A549 (cell line): ENCODE measurements at regions of chr19 and their contacts with region 1.

Region 1: GRCh38 chr19:49570138-49570856 is 10.1 kb downstream of the NOSIP start:
- DNase-seq: peak; percentile 92
- ATAC-seq: peak; percentile 94 to 95
- H3K4me3 ChIP-seq: no peak overlapping the region
- H3K27ac ChIP-seq: no peak overlapping the region
- H3K4me1 ChIP-seq: peaks cover 13% of the 10 kb centered on the region
- CTCF ChIP-seq: peak; percentile 100
- EP300 ChIP-seq: no peak
- POLR2A ChIP-seq: no peak
- RAD21 ChIP-seq: peak; percentile 88 to 94

Region 2: GRCh38 chr19:49473868-49474544 is 96.3 kb before region 1 on chr19 and contains the start of gene FLT3LG:
- CTCF ChIA-PET with region 1: interaction called, 14 read pairs
- POLR2A ChIA-PET with region 1: no interaction called
- DNase-seq: peak; percentile 61 to 90
- ATAC-seq: peak; percentile 59 to 71
- H3K4me3 ChIP-seq: peak within 1 kb of the TSS; percentile 59
- H3K27ac ChIP-seq: peak within 1 kb of the TSS; percentile 77 to 91
- H3K4me1 ChIP-seq: peaks cover 21% of the 10 kb centered on the region
- CTCF ChIP-seq: peak; percentile 99
- EP300 ChIP-seq: no peak
- POLR2A ChIP-seq: no peak
- RAD21 ChIP-seq: peak; percentile 36 to 59
- polyA plus RNA-seq, gene FLT3LG: 0.42 and 0.58 TPM in 2 replicates

Region 3: DNA sequence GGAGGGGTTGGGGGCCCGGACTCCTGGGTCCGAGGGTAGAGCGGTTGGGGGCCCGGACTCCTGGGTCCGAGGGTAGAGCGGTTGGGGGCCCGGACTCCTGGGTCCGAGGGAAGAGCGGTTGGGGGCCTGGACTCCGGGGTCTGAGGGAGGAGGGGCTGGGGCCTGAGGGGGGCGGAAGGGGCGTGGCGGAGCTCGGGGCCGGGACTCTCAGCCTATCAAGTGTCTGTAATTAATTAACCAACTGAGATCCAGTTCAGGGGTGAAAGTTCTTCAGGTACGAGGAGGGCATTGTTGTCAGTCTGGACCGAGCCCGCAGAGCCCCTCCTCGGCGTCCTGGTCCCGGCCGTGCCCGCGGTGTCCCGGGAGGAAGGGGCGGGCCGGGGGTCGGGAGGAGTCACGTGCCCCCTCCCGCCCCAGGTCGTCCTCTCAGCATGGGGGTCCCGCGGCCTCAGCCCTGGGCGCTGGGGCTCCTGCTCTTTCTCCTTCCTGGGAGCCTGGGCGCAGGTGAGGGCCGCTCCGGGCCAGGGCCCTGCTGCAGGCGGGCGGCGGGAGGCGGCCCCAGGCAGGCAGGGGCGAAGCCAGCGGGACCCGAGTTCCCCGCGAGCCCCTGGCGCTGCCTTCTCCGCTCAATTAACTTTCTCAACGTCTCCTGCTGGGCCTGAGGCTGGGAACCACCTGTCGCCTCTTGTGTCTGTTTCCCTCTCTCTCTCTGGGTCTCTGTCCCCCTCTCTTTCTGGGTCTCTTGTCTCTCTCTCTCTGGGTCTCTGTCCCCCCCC is 57.1 kb before region 1 on chr19:
- CTCF ChIA-PET with region 1: interaction called, 201 read pairs
- POLR2A ChIA-PET with region 1: no interaction called
- DNase-seq: no peak
- ATAC-seq: peak; percentile 71 to 78
- H3K4me3 ChIP-seq: peak overlapping the region; percentile 82
- H3K27ac ChIP-seq: peak overlapping the region; percentile 85 to 94
- H3K4me1 ChIP-seq: peaks cover 15% of the 10 kb centered on the region
- CTCF ChIP-seq: no peak
- EP300 ChIP-seq: no peak
- POLR2A ChIP-seq: no peak
- RAD21 ChIP-seq: no peak

Region 4: DNA sequence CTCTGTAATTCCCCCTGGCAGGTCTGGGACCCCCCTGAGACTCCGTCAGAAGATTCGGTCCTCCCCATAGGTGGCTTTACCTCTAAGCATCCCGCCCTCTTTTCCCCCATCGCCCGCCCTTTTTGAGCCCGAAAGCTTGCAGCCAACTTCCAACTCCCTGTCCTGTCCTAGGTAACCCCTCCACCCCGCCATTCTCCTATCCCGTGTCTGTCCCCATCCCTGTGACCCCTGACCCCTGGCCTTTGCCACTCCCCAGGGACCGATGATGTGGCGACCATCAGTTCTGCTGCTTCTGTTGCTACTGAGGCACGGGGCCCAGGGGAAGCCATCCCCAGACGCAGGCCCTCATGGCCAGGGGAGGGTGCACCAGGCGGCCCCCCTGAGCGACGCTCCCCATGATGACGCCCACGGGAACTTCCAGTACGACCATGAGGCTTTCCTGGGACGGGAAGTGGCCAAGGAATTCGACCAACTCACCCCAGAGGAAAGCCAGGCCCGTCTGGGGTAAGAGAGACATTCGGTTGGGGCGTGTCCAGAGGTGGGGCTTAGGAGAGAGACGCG is 42.0 kb before region 1 on chr19:
- CTCF ChIA-PET with region 1: interaction called, 25 read pairs
- POLR2A ChIA-PET with region 1: no interaction called
- DNase-seq: no peak
- ATAC-seq: no peak
- H3K4me3 ChIP-seq: peak overlapping the region; percentile 39; the same call in 2 of the 3 replicates
- H3K27ac ChIP-seq: peak overlapping the region in 1 of 2 experiments; percentile 62; a peak in 2 of 6 replicates
- H3K4me1 ChIP-seq: peaks cover 3% of the 10 kb centered on the region; the same call in 1 of the 3 replicates
- CTCF ChIP-seq: no peak
- EP300 ChIP-seq: no peak
- POLR2A ChIP-seq: no peak
- RAD21 ChIP-seq: no peak

Region 5: DNA sequence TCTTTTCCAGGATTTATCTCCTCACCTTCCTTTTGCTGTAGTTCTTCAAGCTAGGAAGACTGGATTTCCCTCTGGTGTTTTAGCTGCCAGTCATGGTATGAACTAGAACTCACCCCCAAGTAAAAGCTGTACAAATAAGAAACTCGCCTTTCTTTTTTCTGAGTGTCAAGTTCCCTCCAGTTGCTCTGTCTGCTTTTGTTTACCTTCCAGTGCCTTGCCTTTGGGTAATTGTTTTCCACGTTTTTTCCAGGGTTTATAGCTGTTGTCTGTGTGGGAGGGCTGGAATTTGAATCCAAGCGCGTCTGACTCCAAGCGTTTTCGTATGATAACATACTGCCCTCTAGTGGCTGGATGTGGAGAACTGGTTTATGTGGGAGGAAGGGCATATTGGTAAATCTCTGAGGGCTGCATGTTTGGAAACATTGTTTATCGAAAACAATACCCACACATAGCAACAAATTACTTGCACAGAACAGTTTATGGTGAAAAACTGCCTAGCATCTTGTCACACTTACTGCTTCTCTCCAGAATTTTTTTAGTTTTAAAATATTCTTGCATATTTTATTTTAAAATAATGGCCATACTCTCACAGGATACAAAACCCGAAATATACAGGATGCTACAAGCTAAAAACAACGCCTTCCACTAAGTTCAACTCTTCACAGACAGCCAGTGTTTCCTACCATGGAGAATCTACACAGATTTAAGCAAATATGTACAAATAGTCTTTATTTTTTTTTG is 23.3 kb before region 1 on chr19:
- CTCF ChIA-PET with region 1: interaction called, 426 read pairs
- POLR2A ChIA-PET with region 1: no interaction called
- DNase-seq: peak; percentile 91 to 94
- ATAC-seq: peak; percentile 88 to 89
- H3K4me3 ChIP-seq: peak overlapping the region; percentile 23; the same call in 1 of the 3 replicates
- H3K27ac ChIP-seq: peak overlapping the region in 1 of 2 experiments; percentile 29; a peak in 3 of 6 replicates
- H3K4me1 ChIP-seq: 0 out of 3 replicates have a peak, but pooled peaks cover 3% of the 10 kb centered on the region
- CTCF ChIP-seq: peak; percentile 97
- EP300 ChIP-seq: no peak
- POLR2A ChIP-seq: no peak
- RAD21 ChIP-seq: peak; percentile 94 to 98

Region 6: GRCh38 chr19:49590071-49590970 is 20.0 kb after region 1 on chr19:
- CTCF ChIA-PET with region 1: interaction called, 24 read pairs
- POLR2A ChIA-PET with region 1: interaction called, 5 read pairs
- DNase-seq: peak; percentile 97 to 99
- ATAC-seq: peak; percentile 49 to 84
- H3K4me3 ChIP-seq: peak overlapping the region; percentile 63
- H3K27ac ChIP-seq: peak overlapping the region; percentile 97 to 99
- H3K4me1 ChIP-seq: peaks cover 11% of the 10 kb centered on the region
- CTCF ChIP-seq: no peak; the same call in 2 of the 3 replicates
- EP300 ChIP-seq: no peak
- POLR2A ChIP-seq: peak; percentile 75
- RAD21 ChIP-seq: no peak

Region 7: DNA sequence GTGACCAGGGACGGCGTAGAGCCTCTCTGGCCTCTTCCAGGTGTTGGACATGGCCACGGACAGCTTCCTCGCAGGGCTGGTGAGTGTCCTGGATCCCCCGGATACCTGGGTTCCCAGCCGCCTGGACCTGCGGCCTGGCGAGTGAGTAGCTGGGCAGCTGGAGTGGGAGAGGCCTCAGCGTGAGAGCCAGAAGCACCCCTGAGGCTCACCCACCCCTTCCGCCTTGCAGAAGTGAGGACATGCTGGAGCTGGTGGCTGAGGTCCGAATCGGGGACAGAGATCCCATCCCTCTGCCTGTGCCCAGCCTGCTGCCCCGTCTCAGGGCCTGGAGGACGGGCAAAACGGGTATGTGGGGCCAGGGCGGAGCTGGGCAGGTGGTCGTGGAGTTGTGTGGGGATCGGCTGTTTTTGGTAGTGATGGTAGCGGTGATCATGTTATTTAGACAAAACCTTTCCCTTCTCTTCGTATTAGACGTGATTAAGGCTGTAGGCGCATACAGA is 76.2 kb after region 1 on chr19:
- CTCF ChIA-PET with region 1: interaction called, 15 read pairs
- POLR2A ChIA-PET with region 1: no interaction called
- DNase-seq: no peak
- ATAC-seq: no peak
- H3K4me3 ChIP-seq: no peak overlapping the region
- H3K27ac ChIP-seq: no peak overlapping the region
- H3K4me1 ChIP-seq: peaks cover 17% of the 10 kb centered on the region
- CTCF ChIP-seq: no peak
- EP300 ChIP-seq: no peak
- POLR2A ChIP-seq: no peak
- RAD21 ChIP-seq: no peak

Region 8: GRCh38 chr19:49775742-49776370 is 205.6 kb after region 1 on chr19:
- CTCF ChIA-PET with region 1: no interaction called
- POLR2A ChIA-PET with region 1: no interaction called
- DNase-seq: no peak
- ATAC-seq: no peak
- H3K4me3 ChIP-seq: no peak overlapping the region
- H3K27ac ChIP-seq: no peak overlapping the region
- H3K4me1 ChIP-seq: no peaks in the 10 kb centered on the region
- CTCF ChIP-seq: no peak
- EP300 ChIP-seq: no peak
- POLR2A ChIP-seq: no peak
- RAD21 ChIP-seq: no peak